Right lobe of liver (tissue), 6 donors: ENCODE measurements at regions of chr17 and their contacts with region 1.

Region 1: GRCh38 chr17:69523244-69523861 is 108.9 kb downstream of the MAP2K6 start:
- DNase-seq: no peak
- ATAC-seq: peak; percentile 83 to 93 (median 90)
- H3K4me3 ChIP-seq: no peak overlapping the region
- H3K27ac ChIP-seq: no peak overlapping the region
- H3K4me1 ChIP-seq: no peaks in the 10 kb centered on the region
- H3K27me3 ChIP-seq: no peaks in the 10 kb centered on the region
- CTCF ChIP-seq: peak; percentile 67 to 74 (median 73)
- POLR2A ChIP-seq: no peak

Region 2: GRCh38 chr17:69358688-69359596 is 164.4 kb before region 1 on chr17:
- intact Hi-C with region 1: loop called in 1 of 2 experiments (anchors 10 kb)
- DNase-seq: no peak
- ATAC-seq: no peak
- H3K4me3 ChIP-seq: no peak overlapping the region
- H3K27ac ChIP-seq: no peak overlapping the region
- H3K4me1 ChIP-seq: no peaks in the 10 kb centered on the region
- H3K27me3 ChIP-seq: no peaks in the 10 kb centered on the region
- CTCF ChIP-seq: peak in 1 of 4 donors; percentile 9
- POLR2A ChIP-seq: no peak